OCI-LY7 (cell line): ENCODE measurements at regions of chr2 and their contacts with region 1.

Region 1: GRCh38 chr2:196239622-196240587 is 68.5 kb upstream of the STK17B start:
- DNase-seq: peak; percentile 96
- H3K4me3 ChIP-seq: peak overlapping the region; percentile 53
- H3K27ac ChIP-seq: peak overlapping the region; percentile 93
- H3K4me1 ChIP-seq: peaks cover 63% of the 10 kb centered on the region
- CTCF ChIP-seq: peak; percentile 37; the same call in 1 of the 2 replicates

Region 2: GRCh38 chr2:196160101-196160500 is 79.8 kb before region 1 on chr2:
- CTCF ChIA-PET with region 1: no interaction called
- POLR2A ChIA-PET with region 1: interaction called, 13 read pairs
- intact Hi-C with region 1: no loop called
- DNase-seq: peak; percentile 91
- H3K4me3 ChIP-seq: peak overlapping the region; percentile 54
- H3K27ac ChIP-seq: peak overlapping the region; percentile 82
- H3K4me1 ChIP-seq: peaks cover 84% of the 10 kb centered on the region
- CTCF ChIP-seq: no peak

Region 3: GRCh38 chr2:196205881-196206435 is 33.9 kb before region 1 on chr2:
- CTCF ChIA-PET with region 1: no interaction called
- POLR2A ChIA-PET with region 1: interaction called, 4 read pairs
- intact Hi-C with region 1: loop called (anchors 2 kb)
- DNase-seq: no peak
- H3K4me3 ChIP-seq: no peak overlapping the region
- H3K27ac ChIP-seq: no peak overlapping the region
- H3K4me1 ChIP-seq: peaks cover 55% of the 10 kb centered on the region
- CTCF ChIP-seq: no peak

Region 4: GRCh38 chr2:196256585-196256984 is 16.7 kb after region 1 on chr2:
- CTCF ChIA-PET with region 1: no interaction called
- POLR2A ChIA-PET with region 1: interaction called, 51 read pairs
- intact Hi-C with region 1: no loop called
- DNase-seq: no peak
- H3K4me3 ChIP-seq: no peak overlapping the region
- H3K27ac ChIP-seq: no peak overlapping the region
- H3K4me1 ChIP-seq: peaks cover 19% of the 10 kb centered on the region
- CTCF ChIP-seq: no peak

Region 5: GRCh38 chr2:196263181-196263747 is 23.4 kb after region 1 on chr2:
- CTCF ChIA-PET with region 1: interaction called, 3 read pairs
- POLR2A ChIA-PET with region 1: interaction called, 51 read pairs
- intact Hi-C with region 1: no loop called
- DNase-seq: peak; percentile 72
- H3K4me3 ChIP-seq: peak overlapping the region; percentile 39
- H3K27ac ChIP-seq: peak overlapping the region; percentile 65
- H3K4me1 ChIP-seq: peaks cover 70% of the 10 kb centered on the region
- CTCF ChIP-seq: no peak

Region 6: GRCh38 chr2:196268538-196269338 is 28.8 kb after region 1 on chr2:
- CTCF ChIA-PET with region 1: no interaction called
- POLR2A ChIA-PET with region 1: interaction called, 59 read pairs
- intact Hi-C with region 1: no loop called
- DNase-seq: peak; percentile 48
- H3K4me3 ChIP-seq: peak overlapping the region; percentile 36
- H3K27ac ChIP-seq: peak overlapping the region; percentile 66
- H3K4me1 ChIP-seq: peaks cover 89% of the 10 kb centered on the region
- CTCF ChIP-seq: no peak